ENCODE measurements at regions of chr1 and their contacts with region 1.

Region 1: GRCh38 chr1:119743781-119744597 is 24.7 kb downstream of the HMGCS2 start:
- DNase-seq: peak; percentile 64
- ATAC-seq: peak; percentile 60
- H3K4me3 Mint-ChIP-seq: no peak overlapping the region
- H3K27ac Mint-ChIP-seq: no peak overlapping the region
- H3K4me1 Mint-ChIP-seq: peaks cover 12% of the 10 kb centered on the region
- H3K27me3 Mint-ChIP-seq: peaks cover 3% of the 10 kb centered on the region

Region 2: GRCh38 chr1:119569095-119569494 is 174.9 kb before region 1 on chr1:
- CTCF ChIA-PET with region 1: no interaction called
- DNase-seq: no peak
- ATAC-seq: no peak
- H3K4me3 Mint-ChIP-seq: no peak overlapping the region
- H3K27ac Mint-ChIP-seq: no peak overlapping the region
- H3K4me1 Mint-ChIP-seq: peaks cover 2% of the 10 kb centered on the region
- H3K27me3 Mint-ChIP-seq: peaks cover 15% of the 10 kb centered on the region

Region 3: GRCh38 chr1:119727996-119728395 is 16.0 kb before region 1 on chr1:
- CTCF ChIA-PET with region 1: interaction called, 12 read pairs
- DNase-seq: no peak
- ATAC-seq: no peak
- H3K4me3 Mint-ChIP-seq: no peak overlapping the region
- H3K27ac Mint-ChIP-seq: peak overlapping the region; percentile 12
- H3K4me1 Mint-ChIP-seq: peaks cover 3% of the 10 kb centered on the region
- H3K27me3 Mint-ChIP-seq: no peaks in the 10 kb centered on the region

Region 4: GRCh38 chr1:119758584-119758983 is 14.6 kb after region 1 on chr1:
- CTCF ChIA-PET with region 1: interaction called, 39 read pairs
- DNase-seq: peak; percentile 47
- ATAC-seq: peak; percentile 47
- H3K4me3 Mint-ChIP-seq: no peak overlapping the region
- H3K27ac Mint-ChIP-seq: no peak overlapping the region
- H3K4me1 Mint-ChIP-seq: peaks cover 12% of the 10 kb centered on the region
- H3K27me3 Mint-ChIP-seq: peaks cover 76% of the 10 kb centered on the region

Region 5: DNA sequence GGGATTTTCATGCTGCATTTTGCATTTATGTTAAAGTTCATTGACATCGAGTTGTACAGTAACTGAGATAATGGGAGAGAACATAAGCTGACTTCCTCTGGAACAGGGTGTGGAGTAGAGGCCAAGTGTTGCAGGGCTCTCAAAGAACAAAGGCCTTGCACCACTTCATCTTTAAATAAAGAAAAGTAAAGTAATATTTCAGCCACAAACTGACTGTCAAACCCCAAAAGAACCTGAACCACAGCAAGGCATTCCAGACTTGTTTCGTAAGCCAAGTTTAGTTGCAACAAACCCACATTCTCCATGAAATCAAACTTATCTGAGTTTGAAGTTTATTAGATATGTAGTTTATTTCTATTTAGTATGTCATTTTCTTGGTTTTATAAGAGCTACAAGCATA is 43.8 kb after region 1 on chr1:
- CTCF ChIA-PET with region 1: interaction called, 12 read pairs
- DNase-seq: no peak
- ATAC-seq: no peak
- H3K4me3 Mint-ChIP-seq: no peak overlapping the region
- H3K27ac Mint-ChIP-seq: no peak overlapping the region
- H3K4me1 Mint-ChIP-seq: peaks cover 39% of the 10 kb centered on the region
- H3K27me3 Mint-ChIP-seq: peaks cover 57% of the 10 kb centered on the region

Measured in activated CD8-positive, alpha-beta memory T cell treated with anti-CD3 and anti-CD28 coated beads, Interleukin-2, amount 10 ng/mL, durations not matched to agents 7 days and 5 days (primary cell).